ENCODE measurements at regions of chrX and their contacts with region 1.

Region 1: DNA sequence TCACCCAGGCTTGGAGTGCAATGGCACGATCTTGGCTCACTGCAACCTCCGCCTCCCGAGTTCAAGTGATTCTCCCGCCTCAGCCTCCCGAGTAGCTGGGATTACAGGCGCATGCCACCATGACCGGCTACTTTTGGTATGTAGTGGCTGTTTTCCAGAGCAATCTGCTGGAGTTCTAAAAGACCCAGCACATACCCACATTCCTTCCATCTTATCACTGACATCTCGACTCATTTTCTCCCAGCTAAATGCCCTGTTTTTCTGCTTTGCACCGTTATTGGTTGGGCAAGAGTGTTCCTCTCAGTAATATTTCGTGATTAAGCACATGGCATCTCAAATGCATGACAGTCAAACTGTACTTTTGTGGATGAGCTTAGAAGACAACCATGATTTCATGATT is 53.7 kb downstream of the PRKX start:
- DNase-seq: no peak
- H3K4me3 ChIP-seq: no peak overlapping the region
- H3K4me3 Mint-ChIP-seq: no peak overlapping the region
- H3K27ac ChIP-seq: peak overlapping the region in 1 of 2 donors; percentile 23
- H3K27ac Mint-ChIP-seq: peak overlapping the region in 1 of 7 donors; percentile 51
- H3K4me1 ChIP-seq: peaks cover 23 to 34% of the 10 kb centered on the region in 2 donors
- H3K4me1 Mint-ChIP-seq: peaks cover 28% of the 10 kb centered on the region
- H3K27me3 ChIP-seq: no peaks in the 10 kb centered on the region
- H3K27me3 Mint-ChIP-seq: peaks cover 0 to 2% (median 0%) of the 10 kb centered on the region in 3 donors
- CTCF ChIP-seq: no peak

Region 2: GRCh38 chrX:3713225-3713936 is 53.6 kb after region 1 on chrX and contains the start of gene PRKX:
- intact Hi-C with region 1: loop called in 1 of 2 experiments (anchors 5 kb)
- DNase-seq: peak; percentile 20 to 45 (median 24)
- H3K4me3 ChIP-seq: peak within 1 kb of the TSS; percentile 68 to 89 (median 83)
- H3K4me3 Mint-ChIP-seq: peak within 1 kb of the TSS; percentile 95 to 96
- H3K27ac ChIP-seq: peak within 1 kb of the TSS in 1 of 2 donors; percentile 70
- H3K27ac Mint-ChIP-seq: peak within 1 kb of the TSS in 6 of 7 donors; percentile 41 to 83 (median 67)
- H3K4me1 ChIP-seq: peaks cover 14 to 31% of the 10 kb centered on the region in 2 donors
- H3K4me1 Mint-ChIP-seq: peaks cover 17% of the 10 kb centered on the region
- H3K27me3 ChIP-seq: no peaks in the 10 kb centered on the region
- H3K27me3 Mint-ChIP-seq: peaks cover 0 to 8% (median 0%) of the 10 kb centered on the region in 3 donors
- CTCF ChIP-seq: no peak
- polyA plus RNA-seq, gene PRKX: 41.6 to 47.0 (median 46.2) TPM

Region 3: GRCh38 chrX:3728454-3728853 is 68.7 kb after region 1 on chrX:
- intact Hi-C with region 1: no loop called
- DNase-seq: no peak
- H3K4me3 ChIP-seq: no peak overlapping the region
- H3K4me3 Mint-ChIP-seq: no peak overlapping the region
- H3K27ac ChIP-seq: no peak overlapping the region
- H3K27ac Mint-ChIP-seq: no peak overlapping the region
- H3K4me1 ChIP-seq: no peaks in the 10 kb centered on the region
- H3K4me1 Mint-ChIP-seq: no peaks in the 10 kb centered on the region
- H3K27me3 ChIP-seq: no peaks in the 10 kb centered on the region
- H3K27me3 Mint-ChIP-seq: peaks cover 0 to 13% (median 2%) of the 10 kb centered on the region in 3 donors
- CTCF ChIP-seq: no peak

Region 4: DNA sequence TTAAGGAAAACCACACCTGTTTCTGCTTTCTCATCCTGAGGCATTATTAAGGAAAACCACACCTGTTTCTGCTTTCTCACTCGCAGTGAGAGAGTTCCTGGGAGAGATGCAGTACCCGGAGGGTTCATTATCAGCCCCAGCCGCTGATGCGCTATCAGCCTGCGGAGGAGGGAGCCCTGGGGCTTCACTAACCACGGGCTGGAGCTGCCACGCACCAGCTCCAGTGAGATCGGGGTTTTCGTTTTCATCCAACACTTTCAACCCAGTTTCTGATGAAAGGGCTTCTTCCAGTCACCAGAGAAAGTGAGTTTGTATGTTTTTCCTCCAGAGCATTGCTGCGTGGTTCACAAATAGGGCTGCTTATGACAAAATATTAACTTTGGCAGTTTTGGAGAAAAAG is 146.9 kb after region 1 on chrX:
- intact Hi-C with region 1: loop called in 1 of 2 experiments (anchors 5 kb)
- DNase-seq: no peak
- H3K4me3 ChIP-seq: no peak overlapping the region
- H3K4me3 Mint-ChIP-seq: peak overlapping the region in 1 of 2 donors; percentile 17
- H3K27ac ChIP-seq: no peak overlapping the region
- H3K27ac Mint-ChIP-seq: no peak overlapping the region
- H3K4me1 ChIP-seq: peaks cover 0 to 1% of the 10 kb centered on the region in 2 donors
- H3K4me1 Mint-ChIP-seq: peaks cover under 1% of the 10 kb centered on the region
- H3K27me3 ChIP-seq: peaks cover 6 to 8% of the 10 kb centered on the region in 2 donors
- H3K27me3 Mint-ChIP-seq: peaks cover 11 to 20% (median 19%) of the 10 kb centered on the region in 3 donors
- CTCF ChIP-seq: no peak

Measured in CD14-positive monocyte (primary cell).